WTC11 (cell line): ENCODE measurements at regions of chr3 and their contacts with region 1.

Region 1: GRCh38 chr3:48151058-48151806 is 37.0 kb downstream of the CDC25A start:
- DNase-seq: peak; percentile 90
- ATAC-seq: peak; percentile 99
- H3K4me3 Mint-ChIP-seq: no peak overlapping the region
- H3K27ac Mint-ChIP-seq: no peak overlapping the region
- H3K4me1 Mint-ChIP-seq: peaks cover 7% of the 10 kb centered on the region
- H3K27me3 Mint-ChIP-seq: no peaks in the 10 kb centered on the region
- CTCF ChIP-seq: peak; percentile 69

Region 2: DNA sequence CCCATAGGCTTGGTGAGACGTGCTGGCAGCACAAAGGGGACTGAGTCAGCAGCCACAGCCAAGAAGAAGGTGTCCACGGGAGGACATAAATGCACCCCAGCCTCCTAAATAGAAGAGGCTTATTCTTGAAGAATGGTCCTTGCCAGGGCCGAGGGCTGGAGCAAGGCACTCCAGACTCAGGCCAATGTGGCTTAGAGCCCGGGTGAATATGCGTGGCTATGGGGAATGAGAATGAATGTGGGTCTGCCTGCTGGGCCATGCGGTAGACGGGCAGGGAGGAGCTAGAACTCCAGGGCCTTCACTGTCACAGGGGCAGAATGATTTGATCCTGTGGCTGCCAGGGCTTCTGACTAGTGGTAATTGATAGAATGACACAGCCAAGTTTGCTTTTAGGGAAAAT is 314.2 kb before region 1 on chr3:
- CTCF ChIA-PET with region 1: interaction called, 145 read pairs
- POLR2A ChIA-PET with region 1: interaction called, 4 read pairs
- DNase-seq: no peak
- ATAC-seq: peak; percentile 20
- H3K4me3 Mint-ChIP-seq: no peak overlapping the region
- H3K27ac Mint-ChIP-seq: peak overlapping the region; percentile 67
- H3K4me1 Mint-ChIP-seq: peaks cover 27% of the 10 kb centered on the region
- H3K27me3 Mint-ChIP-seq: no peaks in the 10 kb centered on the region
- CTCF ChIP-seq: no peak

Region 3: GRCh38 chr3:47865192-47865591 is 286.0 kb before region 1 on chr3:
- CTCF ChIA-PET with region 1: interaction called, 30 read pairs
- POLR2A ChIA-PET with region 1: no interaction called
- DNase-seq: no peak
- ATAC-seq: peak; percentile 63
- H3K4me3 Mint-ChIP-seq: no peak overlapping the region
- H3K27ac Mint-ChIP-seq: peak overlapping the region; percentile 85
- H3K4me1 Mint-ChIP-seq: no peaks in the 10 kb centered on the region
- H3K27me3 Mint-ChIP-seq: no peaks in the 10 kb centered on the region
- CTCF ChIP-seq: no peak

Region 4: GRCh38 chr3:47961815-47962618 is 189.2 kb before region 1 on chr3:
- CTCF ChIA-PET with region 1: interaction called, 11 read pairs
- POLR2A ChIA-PET with region 1: no interaction called
- DNase-seq: peak; percentile 16
- ATAC-seq: peak; percentile 86
- H3K4me3 Mint-ChIP-seq: no peak overlapping the region
- H3K27ac Mint-ChIP-seq: peak overlapping the region; percentile 81
- H3K4me1 Mint-ChIP-seq: peaks cover 29% of the 10 kb centered on the region
- H3K27me3 Mint-ChIP-seq: no peaks in the 10 kb centered on the region
- CTCF ChIP-seq: no peak

Region 5: DNA sequence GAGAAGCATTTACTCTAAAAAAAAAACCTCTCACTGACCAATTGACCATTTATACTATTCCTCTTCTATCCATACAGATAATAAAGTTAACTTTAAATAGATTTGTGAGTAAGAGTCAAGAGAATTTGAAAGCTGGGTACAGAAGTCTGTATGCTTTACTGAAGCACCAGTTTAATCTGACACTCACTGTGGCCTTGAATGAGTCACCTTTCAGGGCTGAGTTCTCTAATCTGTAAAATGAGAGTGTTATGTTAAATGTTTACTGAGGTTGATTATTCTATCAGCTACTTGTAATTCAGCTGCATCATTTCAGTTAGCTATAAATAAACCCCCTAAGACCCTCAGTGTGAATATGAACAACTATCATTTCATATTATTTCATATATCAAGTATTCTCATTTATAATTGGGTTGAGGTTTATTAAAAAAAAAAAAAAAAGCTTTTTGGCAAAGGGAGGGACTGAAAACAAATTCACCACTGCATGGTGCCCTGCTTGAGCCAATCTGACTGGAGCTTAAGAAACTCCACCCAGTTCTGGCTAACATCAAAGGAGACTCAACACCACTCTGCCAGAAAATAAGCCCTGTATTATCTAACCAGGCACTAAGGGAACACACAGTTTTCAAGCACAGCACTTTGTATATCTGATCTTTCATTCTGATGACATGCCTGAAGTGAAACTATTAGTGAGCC is 137.8 kb before region 1 on chr3:
- CTCF ChIA-PET with region 1: interaction called, 27 read pairs
- POLR2A ChIA-PET with region 1: no interaction called
- DNase-seq: no peak
- ATAC-seq: no peak; the same call in 1 of the 2 replicates
- H3K4me3 Mint-ChIP-seq: no peak overlapping the region
- H3K27ac Mint-ChIP-seq: no peak overlapping the region
- H3K4me1 Mint-ChIP-seq: peaks cover 52% of the 10 kb centered on the region
- H3K27me3 Mint-ChIP-seq: no peaks in the 10 kb centered on the region
- CTCF ChIP-seq: no peak

Region 6: DNA sequence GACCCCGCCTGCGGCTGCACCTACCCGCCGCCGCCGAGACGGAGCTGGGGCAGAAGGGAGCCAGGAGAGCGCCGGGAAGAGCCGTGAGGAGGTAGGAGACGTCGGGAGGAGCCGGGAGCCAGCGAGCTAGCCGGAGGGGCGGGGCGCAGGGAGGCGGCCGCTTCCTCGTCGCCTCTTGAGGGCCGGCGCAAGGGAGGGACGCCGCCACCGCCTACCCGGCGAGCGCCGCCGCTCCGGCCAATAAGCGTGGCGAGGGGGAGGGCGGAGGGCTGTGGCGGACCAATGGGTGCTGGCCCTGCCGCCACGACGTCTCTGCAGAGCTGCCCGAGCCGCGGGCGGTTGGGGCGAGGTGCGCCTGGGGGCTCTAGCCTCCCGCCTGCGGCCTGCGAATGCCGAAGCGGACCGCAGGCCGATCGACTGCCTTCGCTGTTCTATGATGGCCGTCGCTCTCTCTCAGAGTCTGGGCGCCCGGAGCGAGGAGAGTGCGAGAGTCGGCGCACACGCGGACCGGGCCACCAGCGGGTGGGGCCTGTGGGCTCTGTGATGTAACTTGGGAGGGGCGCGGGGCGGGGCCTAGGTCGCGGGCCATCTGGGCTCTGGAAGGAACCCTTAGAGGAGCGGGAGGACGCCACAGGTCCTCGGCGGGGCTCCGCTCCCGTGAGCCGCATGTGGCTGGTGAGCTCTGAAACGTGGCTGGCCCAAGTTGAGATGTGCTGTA is 62.3 kb before region 1 on chr3:
- CTCF ChIA-PET with region 1: interaction called, 67 read pairs
- POLR2A ChIA-PET with region 1: interaction called, 10 read pairs
- DNase-seq: peak; percentile 97
- ATAC-seq: peak; percentile 96
- H3K4me3 Mint-ChIP-seq: peak overlapping the region; percentile 94
- H3K27ac Mint-ChIP-seq: peak overlapping the region; percentile 99
- H3K4me1 Mint-ChIP-seq: peaks cover 27% of the 10 kb centered on the region
- H3K27me3 Mint-ChIP-seq: no peaks in the 10 kb centered on the region
- CTCF ChIP-seq: no peak

Region 7: GRCh38 chr3:48338635-48339034 is 187.4 kb after region 1 on chr3:
- CTCF ChIA-PET with region 1: no interaction called
- POLR2A ChIA-PET with region 1: no interaction called
- DNase-seq: no peak
- ATAC-seq: no peak
- H3K4me3 Mint-ChIP-seq: no peak overlapping the region
- H3K27ac Mint-ChIP-seq: no peak overlapping the region
- H3K4me1 Mint-ChIP-seq: no peaks in the 10 kb centered on the region
- H3K27me3 Mint-ChIP-seq: peaks cover 7% of the 10 kb centered on the region
- CTCF ChIP-seq: no peak